ENCODE measurements at regions of chr17 and their contacts with region 1.

Region 1: GRCh38 chr17:15260376-15261257 is 4.5 kb downstream of the PMP22 start:
- DNase-seq: peak; percentile 92 to 95
- ATAC-seq: peak; percentile 54 to 69 (median 62)
- H3K4me3 ChIP-seq: peak overlapping the region; percentile 81
- H3K27ac ChIP-seq: peak overlapping the region; percentile 95
- H3K4me1 ChIP-seq: peaks cover 70% of the 10 kb centered on the region
- H3K27me3 ChIP-seq: no peaks in the 10 kb centered on the region
- CTCF ChIP-seq: peak; percentile 92

Region 2: DNA sequence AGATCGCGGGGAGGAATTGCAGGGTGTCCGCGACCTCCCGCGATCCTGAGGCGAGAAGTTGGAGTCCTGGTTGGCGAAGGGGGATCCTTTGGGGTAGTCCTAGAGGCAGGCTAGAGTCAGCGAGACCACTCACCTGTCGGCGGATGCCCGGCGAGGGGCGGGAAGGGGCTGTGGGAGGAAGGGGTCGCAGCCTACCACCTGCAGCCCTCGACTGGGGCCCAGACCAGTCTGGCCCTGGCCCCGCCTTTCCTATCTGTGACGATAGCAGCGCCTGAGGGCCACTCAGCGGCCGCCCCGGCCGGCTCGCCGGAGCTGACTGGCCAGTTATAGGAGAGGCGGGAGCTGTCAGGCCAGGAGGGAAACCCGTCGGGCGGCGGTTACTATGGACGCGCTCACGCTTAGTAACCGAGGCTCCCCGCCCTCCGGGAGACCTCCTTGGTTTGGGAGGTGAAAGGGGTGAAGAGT is 80.8 kb after region 1 on chr17 and contains the start of gene TEKT3:
- intact Hi-C with region 1: loop called in 1 of 2 experiments (anchors 10 kb)
- DNase-seq: peak; percentile 88 to 93
- ATAC-seq: peak; percentile 100
- H3K4me3 ChIP-seq: peak within 1 kb of the TSS; percentile 73
- H3K27ac ChIP-seq: no peak within 1 kb of the TSS
- H3K4me1 ChIP-seq: peaks cover 3% of the 10 kb centered on the region
- H3K27me3 ChIP-seq: peaks cover 0 to 1% (median 0%) of the 10 kb centered on the region in 3 donors
- CTCF ChIP-seq: no peak
- total RNA-seq, gene TEKT3: 0.64 to 0.97 TPM in 2 of 4 donors, not detected in the others

Region 3: GRCh38 chr17:15409721-15410250 is 149.2 kb after region 1 on chr17:
- intact Hi-C with region 1: loop called in 1 of 2 experiments (anchors 5 kb)
- DNase-seq: peak in 1 of 2 donors; percentile 52
- ATAC-seq: peak; percentile 19 to 39 (median 30)
- H3K4me3 ChIP-seq: no peak overlapping the region
- H3K27ac ChIP-seq: peak overlapping the region; percentile 68
- H3K4me1 ChIP-seq: peaks cover 16% of the 10 kb centered on the region
- H3K27me3 ChIP-seq: no peaks in the 10 kb centered on the region
- CTCF ChIP-seq: no peak

Region 4: DNA sequence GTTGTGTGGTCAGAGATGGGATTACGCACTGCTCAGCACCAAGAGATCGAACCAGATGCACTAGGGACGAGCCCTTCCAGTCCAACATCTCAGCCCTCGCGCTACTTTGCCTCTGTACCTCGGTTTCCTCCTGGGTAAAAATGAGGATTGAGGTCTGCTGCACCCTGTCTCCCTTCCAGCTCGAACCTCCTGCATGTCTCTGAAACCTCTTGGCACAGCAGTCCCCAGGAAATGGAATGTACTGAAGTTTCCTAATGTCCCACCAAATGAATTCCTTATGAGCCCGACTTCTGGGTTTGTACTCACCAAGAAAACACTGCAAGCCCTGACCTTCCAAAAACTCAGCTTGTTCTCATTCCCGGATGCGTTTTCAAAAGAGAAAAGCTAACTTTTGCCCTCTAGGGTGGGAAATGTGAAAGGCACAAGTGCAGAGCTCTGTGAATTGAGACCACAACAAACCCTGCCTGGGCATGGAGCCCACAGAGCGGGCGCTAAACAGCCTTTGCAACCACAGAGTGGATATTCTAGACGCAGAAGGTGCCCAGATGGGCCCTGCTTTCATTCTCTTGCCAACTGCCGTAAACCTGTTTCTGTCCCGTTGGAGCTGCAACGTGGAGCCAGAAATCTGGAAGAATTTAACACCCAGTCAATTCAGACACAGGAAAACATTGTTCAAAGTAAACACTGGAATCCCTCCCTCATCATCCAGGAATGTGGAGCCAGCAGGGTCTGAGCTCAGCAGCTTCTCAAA is 196.5 kb after region 1 on chr17:
- intact Hi-C with region 1: loop called (anchors 2 to 5 kb)
- DNase-seq: peak; percentile 88 to 94
- ATAC-seq: peak; percentile 87 to 93 (median 88)
- H3K4me3 ChIP-seq: peak overlapping the region; percentile 9
- H3K27ac ChIP-seq: peak overlapping the region; percentile 90
- H3K4me1 ChIP-seq: peaks cover 28% of the 10 kb centered on the region
- H3K27me3 ChIP-seq: no peaks in the 10 kb centered on the region
- CTCF ChIP-seq: peak; percentile 49